Motor neuron (in vitro differentiated cells): ENCODE measurements at regions of chr18 and their contacts with region 1.

Region 1: GRCh38 chr18:62131301-62131909 is 55.5 kb downstream of the PIGN start:
- ATAC-seq: peak in 7 of 8 experiments; percentile 47 to 69 (median 56)
- H3K4me3 ChIP-seq: no peak overlapping the region
- H3K27ac ChIP-seq: no peak overlapping the region
- H3K4me1 ChIP-seq: peaks cover 0 to 3% of the 10 kb centered on the region in 2 donors

Region 2: GRCh38 chr18:60684843-60685513 is 1446.4 kb before region 1 on chr18:
- in situ Hi-C with region 1: loop called in 1 of 9 experiments (anchors 25 kb)
- ATAC-seq: peak in 3 of 8 experiments; percentile 93 to 96 (median 96)
- H3K4me3 ChIP-seq: no peak overlapping the region
- H3K27ac ChIP-seq: no peak overlapping the region
- H3K4me1 ChIP-seq: peaks cover 0 to 6% of the 10 kb centered on the region in 2 donors

Region 3: DNA sequence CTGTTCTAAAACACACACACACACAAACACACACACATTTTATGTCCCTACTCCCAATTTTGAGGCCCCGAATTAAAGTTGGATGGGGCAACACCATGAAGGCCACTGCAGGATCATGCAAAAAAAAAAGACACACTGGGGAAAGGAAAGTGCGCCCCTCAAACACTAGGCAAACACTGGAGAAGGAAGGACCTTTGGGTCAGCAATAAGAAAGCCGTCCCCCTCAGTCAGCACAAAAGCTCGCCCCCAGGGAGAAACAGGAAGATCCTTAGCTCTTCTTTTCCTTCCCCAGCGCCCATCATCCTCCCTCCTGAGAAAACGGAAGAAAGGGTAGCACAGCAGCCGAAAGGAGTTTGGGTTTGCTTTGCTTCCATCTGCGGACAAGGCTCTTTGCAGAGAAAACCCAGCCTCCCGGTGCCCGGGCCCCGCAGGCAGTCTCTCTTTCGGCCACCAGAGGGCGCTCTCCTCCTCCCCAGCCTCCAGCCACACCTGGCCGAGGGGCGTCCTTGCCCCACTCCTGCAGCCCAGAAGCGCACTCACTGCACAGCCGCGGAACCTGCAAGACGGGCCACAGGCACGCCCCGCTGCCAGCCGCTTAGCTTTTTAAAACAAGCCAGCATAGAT is 549.7 kb before region 1 on chr18:
- in situ Hi-C with region 1: loop called in 6 of 9 experiments (anchors 25 kb)
- ATAC-seq: peak; percentile 91 to 100 (median 100)
- H3K4me3 ChIP-seq: peak overlapping the region; percentile 10 to 24 (median 21)
- H3K27ac ChIP-seq: no peak overlapping the region
- H3K4me1 ChIP-seq: peaks cover 0 to 2% of the 10 kb centered on the region in 2 donors

Region 4: DNA sequence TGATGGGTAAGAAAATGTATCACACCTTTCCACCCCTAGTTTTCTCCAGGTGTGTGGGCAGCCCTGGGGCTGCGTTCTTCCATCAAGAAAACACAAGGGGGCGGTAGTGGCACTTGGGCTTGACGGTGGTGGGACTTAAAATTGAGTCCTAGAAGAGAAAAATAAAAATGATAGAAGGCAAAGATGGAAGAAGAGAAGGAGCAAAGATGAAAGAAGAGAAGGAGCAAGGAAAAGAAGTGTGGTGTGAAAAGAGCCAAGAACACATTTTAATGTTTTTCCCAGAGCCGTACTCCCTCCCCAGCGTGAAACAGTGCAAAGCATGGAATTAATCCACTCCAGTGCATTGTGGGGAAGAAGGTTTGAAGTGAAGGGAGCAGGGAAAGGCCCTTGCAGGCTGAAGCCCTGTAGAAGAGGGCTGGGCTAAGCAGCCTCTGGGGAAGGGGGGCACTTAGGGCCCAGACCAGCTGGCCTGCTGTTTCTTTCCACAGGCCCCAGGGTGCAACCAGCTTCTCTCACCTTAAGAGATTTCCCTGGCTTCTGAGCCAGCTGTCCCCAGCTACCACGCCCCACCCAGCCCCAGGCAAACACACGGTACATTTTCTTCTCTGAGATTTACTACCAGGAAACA is 495.4 kb before region 1 on chr18:
- in situ Hi-C with region 1: loop called in 1 of 9 experiments (anchors 25 kb)
- ATAC-seq: peak; percentile 77 to 98 (median 92)
- H3K4me3 ChIP-seq: no peak overlapping the region
- H3K27ac ChIP-seq: no peak overlapping the region
- H3K4me1 ChIP-seq: peaks cover 4 to 6% of the 10 kb centered on the region in 2 donors

Region 5: DNA sequence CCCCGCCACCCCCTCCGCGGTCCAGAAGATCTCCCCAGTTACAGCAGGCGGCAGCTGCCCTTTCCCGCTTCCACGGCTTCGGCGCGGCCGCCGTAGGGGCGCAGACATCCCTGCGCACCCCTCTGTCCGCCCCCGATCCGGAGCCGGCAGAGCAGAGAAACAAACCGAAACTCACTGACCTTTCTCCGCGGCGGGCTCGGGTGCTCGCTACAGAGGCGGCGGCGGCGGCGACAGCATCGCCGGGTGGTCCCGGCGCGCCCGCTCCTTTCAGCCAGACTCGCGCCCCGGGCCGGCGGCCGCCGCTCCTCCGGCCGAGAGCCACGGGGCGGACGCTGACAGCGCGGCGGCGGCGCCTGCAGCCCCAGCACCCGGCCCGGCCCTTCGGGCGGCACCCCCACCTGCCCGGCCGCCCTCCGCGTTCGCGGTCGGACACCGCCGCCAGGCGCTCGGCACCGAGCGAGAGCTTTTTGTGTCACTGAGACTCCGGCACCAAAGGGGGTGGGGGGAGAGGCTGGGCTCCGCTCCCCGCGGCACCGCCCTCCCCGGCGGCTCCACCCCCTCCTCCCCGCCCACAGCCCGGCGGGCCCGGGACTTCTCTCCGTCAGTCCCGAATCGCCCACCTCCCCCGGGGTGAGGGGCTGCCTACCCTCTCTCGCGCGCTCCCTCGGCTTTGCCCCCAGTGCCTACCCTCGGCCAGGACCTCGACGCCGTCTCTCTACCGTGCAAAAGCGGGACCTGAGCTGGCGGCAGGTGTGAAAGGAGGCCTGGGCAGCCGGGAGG is 237.2 kb before region 1 on chr18:
- in situ Hi-C with region 1: loop called in 1 of 9 experiments (anchors 25 kb)
- ATAC-seq: peak; percentile 62 to 80 (median 70)
- H3K4me3 ChIP-seq: peak overlapping the region; percentile 57 to 87 (median 79)
- H3K27ac ChIP-seq: peak overlapping the region; percentile 77 to 86
- H3K4me1 ChIP-seq: peaks cover 8 to 10% of the 10 kb centered on the region in 2 donors

Region 6: GRCh38 chr18:61901323-61901986 is 229.9 kb before region 1 on chr18:
- in situ Hi-C with region 1: loop called in 2 of 9 experiments (anchors 25 kb)
- ATAC-seq: peak in 7 of 8 experiments; percentile 35 to 99 (median 72)
- H3K4me3 ChIP-seq: no peak overlapping the region
- H3K27ac ChIP-seq: no peak overlapping the region
- H3K4me1 ChIP-seq: peaks cover 0 to 6% of the 10 kb centered on the region in 2 donors